ENCODE measurements at regions of chr17 and their contacts with region 1.

Region 1: DNA sequence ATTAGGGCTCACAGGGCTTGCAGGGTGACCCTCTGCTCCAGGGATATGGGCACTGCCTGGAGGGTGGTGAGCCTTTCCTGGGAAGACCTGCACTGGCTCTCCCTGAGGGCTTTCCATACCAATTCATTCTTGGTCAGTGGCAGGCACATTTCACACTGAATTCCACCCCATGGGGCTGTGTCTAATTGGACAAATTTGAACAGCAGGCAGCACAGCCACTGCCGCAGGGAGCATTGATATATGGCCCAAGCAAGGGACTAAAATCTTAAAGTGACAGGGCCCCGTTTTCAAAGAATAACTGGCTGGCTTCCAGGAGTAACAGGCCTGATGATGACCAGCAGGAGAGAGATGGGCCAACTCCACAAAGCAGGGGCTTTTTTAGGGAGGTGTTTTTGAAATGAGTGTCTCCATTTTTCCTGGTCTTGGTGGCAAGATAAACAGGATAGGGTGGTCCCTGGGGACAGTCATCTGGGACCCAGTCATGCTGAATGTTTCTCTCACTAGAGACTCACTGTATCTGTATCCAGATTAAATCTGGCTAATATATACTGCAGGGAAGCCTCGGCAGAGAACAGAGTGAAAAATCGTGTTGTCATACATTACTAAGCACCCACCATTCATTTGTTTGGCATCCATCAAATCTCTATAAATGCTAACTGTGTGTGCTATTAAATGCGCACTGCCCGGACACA is 74.1 kb upstream of the TBX2 start:
- DNase-seq: peak; percentile 81
- ATAC-seq: peak; percentile 67
- H3K4me3 ChIP-seq: no peak overlapping the region
- H3K27ac ChIP-seq: peak overlapping the region; percentile 67
- H3K4me1 ChIP-seq: peaks cover 22% of the 10 kb centered on the region
- H3K27me3 ChIP-seq: no peaks in the 10 kb centered on the region
- CTCF ChIP-seq: no peak
- POLR2A ChIP-seq: no peak
- RAD21 ChIP-seq: peak; percentile 7; the same call in 1 of the 2 replicates

Region 2: GRCh38 chr17:60677308-60678124 is 648.0 kb before region 1 on chr17 and contains the start of gene BCAS3:
- CTCF ChIA-PET with region 1: no interaction called
- POLR2A ChIA-PET with region 1: no interaction called
- dilution Hi-C with region 1: no loop called
- in situ Hi-C with region 1: no loop called
- intact Hi-C with region 1: loop called (anchors 5 kb)
- DNase-seq: peak; percentile 99
- ATAC-seq: peak; percentile 99
- H3K4me3 ChIP-seq: peak within 1 kb of the TSS; percentile 55
- H3K27ac ChIP-seq: peak within 1 kb of the TSS; percentile 43
- H3K4me1 ChIP-seq: no peaks in the 10 kb centered on the region; the same call in 1 of the 2 replicates
- H3K27me3 ChIP-seq: no peaks in the 10 kb centered on the region
- CTCF ChIP-seq: no peak
- POLR2A ChIP-seq: peak; percentile 82
- RAD21 ChIP-seq: no peak
- total RNA-seq, gene BCAS3: 13.9 and 27.1 TPM in 2 replicates